ENCODE measurements at regions of chr4 and their contacts with region 1.

Region 1: DNA sequence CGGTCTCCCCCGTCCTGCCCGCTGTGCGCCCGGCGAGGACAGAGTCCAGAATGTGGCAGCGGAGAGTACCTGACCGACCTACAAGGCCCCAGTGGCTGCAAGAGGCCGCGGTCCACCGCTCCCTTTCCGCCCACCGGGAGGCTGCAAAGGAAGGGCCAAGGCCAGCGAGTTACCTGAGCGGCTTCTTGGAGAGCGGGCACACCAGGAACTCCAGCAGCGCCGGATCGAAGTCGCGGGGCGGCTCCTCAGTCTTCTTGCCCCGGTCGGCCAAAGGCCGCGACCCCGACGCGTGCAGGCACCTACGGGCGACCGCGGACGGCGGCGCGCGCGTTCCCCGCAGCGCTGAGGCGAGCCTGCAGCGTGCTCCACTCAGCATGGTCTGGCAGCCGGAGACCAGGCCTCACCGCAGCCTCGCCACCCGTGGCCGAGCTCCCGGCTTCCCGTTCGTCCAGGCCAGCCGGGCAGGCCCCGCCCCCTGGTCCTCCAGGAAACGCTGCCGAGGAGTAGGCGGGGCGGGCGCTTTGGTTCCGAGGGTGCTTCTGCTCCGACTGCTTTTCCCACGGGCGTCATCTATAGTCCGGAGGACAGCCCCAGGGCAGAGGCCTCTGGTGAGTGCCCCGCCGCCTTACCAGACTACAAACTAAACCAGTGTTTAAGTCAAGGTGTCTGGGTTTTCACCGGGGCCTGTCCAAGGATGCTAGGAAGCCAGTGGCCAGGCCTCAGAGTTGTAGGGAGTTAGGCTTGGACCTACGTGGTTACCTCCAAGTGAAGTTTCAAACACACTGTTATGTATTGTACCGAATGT is at the start of gene PYURF:
- DNase-seq: peak; percentile 86
- ATAC-seq: peak; percentile 97
- H3K4me3 ChIP-seq: peak within 1 kb of the TSS; percentile 95 to 98 (median 96)
- H3K27ac ChIP-seq: peak within 1 kb of the TSS; percentile 94
- H3K4me1 ChIP-seq: peaks cover 28% of the 10 kb centered on the region
- H3K27me3 ChIP-seq: no peaks in the 10 kb centered on the region
- CTCF ChIP-seq: peak; percentile 43
- EP300 ChIP-seq: no peak
- POLR2A ChIP-seq: peak; percentile 87 to 95
- RAD21 ChIP-seq: peak; percentile 31; the same call in 1 of the 2 replicates
- total RNA-seq, gene PYURF: 95.2 and 121 TPM in 2 replicates

Region 2: GRCh38 chr4:88284439-88285234 is 238.9 kb before region 1 on chr4 and contains the start of gene PPM1K:
- CTCF ChIA-PET with region 1: no interaction called
- POLR2A ChIA-PET with region 1: interaction called, 9 read pairs
- in situ Hi-C with region 1: no loop called
- intact Hi-C with region 1: loop called (anchors 2 kb)
- DNase-seq: peak; percentile 95
- ATAC-seq: peak; percentile 95
- H3K4me3 ChIP-seq: peak within 1 kb of the TSS; percentile 74 to 81 (median 76)
- H3K27ac ChIP-seq: peak within 1 kb of the TSS; percentile 82
- H3K4me1 ChIP-seq: peaks cover 32% of the 10 kb centered on the region
- H3K27me3 ChIP-seq: no peaks in the 10 kb centered on the region
- CTCF ChIP-seq: peak; percentile 65
- EP300 ChIP-seq: peak in 1 of 2 experiments; percentile 22; a peak in 1 of 4 replicates
- POLR2A ChIP-seq: peak in 1 of 2 experiments; percentile 46; a peak in 2 of 4 replicates
- RAD21 ChIP-seq: no peak
- total RNA-seq, gene PPM1K: 17.8 and 23.3 TPM in 2 replicates

Region 3: GRCh38 chr4:88591787-88592599 is 68.5 kb after region 1 on chr4 and contains the start of gene HERC3:
- CTCF ChIA-PET with region 1: no interaction called
- POLR2A ChIA-PET with region 1: no interaction called
- in situ Hi-C with region 1: no loop called
- intact Hi-C with region 1: loop called (anchors 1 kb)
- DNase-seq: peak; percentile 67
- ATAC-seq: peak; percentile 99
- H3K4me3 ChIP-seq: peak within 1 kb of the TSS; percentile 68 to 78 (median 75)
- H3K27ac ChIP-seq: peak within 1 kb of the TSS; percentile 44
- H3K4me1 ChIP-seq: peaks cover 20% of the 10 kb centered on the region
- H3K27me3 ChIP-seq: no peaks in the 10 kb centered on the region; a peak in 1 of 5 replicates
- CTCF ChIP-seq: no peak; the same call in 1 of the 2 replicates
- EP300 ChIP-seq: no peak
- POLR2A ChIP-seq: no peak
- RAD21 ChIP-seq: no peak
- total RNA-seq, gene HERC3: 3.8 and 6.7 TPM in 2 replicates

Region 4: GRCh38 chr4:88659055-88659889 is 135.7 kb after region 1 on chr4:
- CTCF ChIA-PET with region 1: interaction called, 4 read pairs
- POLR2A ChIA-PET with region 1: interaction called, 4 read pairs
- in situ Hi-C with region 1: loop called (anchors 5 kb)
- intact Hi-C with region 1: loop called (anchors 1 kb)
- DNase-seq: peak; percentile 52
- ATAC-seq: peak; percentile 99
- H3K4me3 ChIP-seq: no peak overlapping the region; a peak in 1 of 6 replicates
- H3K27ac ChIP-seq: peak overlapping the region; percentile 16
- H3K4me1 ChIP-seq: peaks cover 37% of the 10 kb centered on the region
- H3K27me3 ChIP-seq: no peaks in the 10 kb centered on the region
- CTCF ChIP-seq: peak; percentile 78
- EP300 ChIP-seq: no peak
- POLR2A ChIP-seq: no peak
- RAD21 ChIP-seq: peak; percentile 39; the same call in 1 of the 2 replicates

Region 5: DNA sequence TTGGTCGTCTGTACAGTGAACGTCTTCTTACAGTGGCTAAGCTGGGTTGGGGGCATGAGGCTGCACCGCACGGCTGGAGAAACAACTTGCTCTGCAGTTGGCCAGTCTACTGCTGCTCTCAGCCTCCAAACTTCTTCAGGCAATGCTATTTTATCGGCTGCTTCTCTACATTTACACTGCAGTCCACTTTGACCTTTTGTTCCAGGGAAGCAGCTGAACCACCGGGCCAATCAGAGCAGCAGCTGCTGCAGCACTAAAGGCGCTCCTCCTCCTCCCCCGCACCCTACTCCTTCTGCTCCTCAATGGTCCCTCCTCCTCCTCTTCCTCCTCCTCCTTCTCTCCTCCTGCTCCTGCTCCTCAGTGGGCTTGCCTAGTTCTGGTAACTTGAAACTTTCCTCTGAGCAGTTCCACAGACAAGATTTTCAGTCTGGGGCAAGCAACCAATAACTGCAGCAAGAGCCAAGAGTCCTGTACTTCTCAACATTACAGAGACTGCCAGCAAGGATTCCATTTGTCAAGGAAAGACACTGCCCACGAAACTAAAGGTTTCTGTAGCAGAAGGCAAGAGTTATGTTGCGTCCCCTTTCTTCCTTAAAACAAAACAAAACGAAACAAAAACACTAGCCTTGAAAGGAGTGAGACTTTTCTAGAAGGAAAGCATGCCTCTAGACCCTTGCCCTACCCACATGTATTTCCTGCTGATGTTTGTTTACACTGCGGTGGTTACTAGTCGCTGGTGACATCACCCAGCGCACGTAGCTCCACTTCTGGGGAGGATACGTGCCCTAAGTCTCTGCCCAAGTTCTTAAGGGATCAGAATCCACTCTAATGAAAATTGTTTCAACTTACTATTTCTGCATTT is 299.8 kb after region 1 on chr4:
- CTCF ChIA-PET with region 1: no interaction called
- POLR2A ChIA-PET with region 1: no interaction called
- in situ Hi-C with region 1: loop called (anchors 25 kb)
- intact Hi-C with region 1: no loop called
- DNase-seq: peak; percentile 61
- ATAC-seq: peak; percentile 97
- H3K4me3 ChIP-seq: peak overlapping the region; percentile 60 to 78 (median 76)
- H3K27ac ChIP-seq: peak overlapping the region; percentile 64
- H3K4me1 ChIP-seq: peaks cover 57% of the 10 kb centered on the region
- H3K27me3 ChIP-seq: no peaks in the 10 kb centered on the region; a peak in 1 of 5 replicates
- CTCF ChIP-seq: no peak
- EP300 ChIP-seq: peak in 1 of 2 experiments; percentile 64; a peak in 1 of 4 replicates
- POLR2A ChIP-seq: peak; percentile 34 to 95; a peak in 3 of 4 replicates
- RAD21 ChIP-seq: no peak

Region 6: GRCh38 chr4:89024051-89024675 is 500.6 kb after region 1 on chr4:
- CTCF ChIA-PET with region 1: interaction called, 4 read pairs
- POLR2A ChIA-PET with region 1: no interaction called
- in situ Hi-C with region 1: no loop called
- intact Hi-C with region 1: loop called (anchors 1 kb)
- DNase-seq: peak; percentile 77
- ATAC-seq: peak; percentile 98
- H3K4me3 ChIP-seq: no peak overlapping the region
- H3K27ac ChIP-seq: no peak overlapping the region
- H3K4me1 ChIP-seq: peaks cover 35% of the 10 kb centered on the region
- H3K27me3 ChIP-seq: no peaks in the 10 kb centered on the region
- CTCF ChIP-seq: peak; percentile 87
- EP300 ChIP-seq: no peak
- POLR2A ChIP-seq: no peak
- RAD21 ChIP-seq: peak; percentile 82